ENCODE measurements at regions of chr1 and their contacts with region 1.

Region 1: DNA sequence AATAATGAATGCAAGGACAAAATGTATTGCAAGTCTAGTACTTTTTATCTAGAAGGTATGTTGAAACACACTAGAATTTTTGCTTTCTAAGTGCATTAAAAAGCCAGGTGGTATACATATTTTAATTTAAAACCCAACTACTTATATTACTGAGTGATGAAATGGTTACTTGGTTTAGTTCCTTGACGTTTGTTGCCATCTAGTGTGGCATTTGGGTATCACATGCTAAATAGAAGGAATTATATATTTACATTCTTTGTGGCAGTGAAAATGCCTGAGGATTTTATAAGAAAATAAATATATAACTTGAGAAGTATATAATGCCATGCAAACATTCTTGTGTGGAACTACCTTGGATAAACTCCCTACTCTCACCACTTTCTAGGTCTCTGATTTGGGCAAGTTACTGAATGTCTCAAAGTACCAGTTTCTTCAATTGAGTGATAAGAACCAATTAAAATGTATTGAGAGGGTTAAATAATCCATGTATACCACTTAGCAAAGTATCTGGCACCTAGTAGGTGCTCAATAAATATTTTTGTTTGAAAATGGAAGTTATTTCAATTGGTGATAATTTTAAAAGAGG is 69.6 kb downstream of the SDCCAG8 start:
- DNase-seq: peak; percentile 35
- CTCF ChIP-seq: peak; percentile 80

Region 2: DNA sequence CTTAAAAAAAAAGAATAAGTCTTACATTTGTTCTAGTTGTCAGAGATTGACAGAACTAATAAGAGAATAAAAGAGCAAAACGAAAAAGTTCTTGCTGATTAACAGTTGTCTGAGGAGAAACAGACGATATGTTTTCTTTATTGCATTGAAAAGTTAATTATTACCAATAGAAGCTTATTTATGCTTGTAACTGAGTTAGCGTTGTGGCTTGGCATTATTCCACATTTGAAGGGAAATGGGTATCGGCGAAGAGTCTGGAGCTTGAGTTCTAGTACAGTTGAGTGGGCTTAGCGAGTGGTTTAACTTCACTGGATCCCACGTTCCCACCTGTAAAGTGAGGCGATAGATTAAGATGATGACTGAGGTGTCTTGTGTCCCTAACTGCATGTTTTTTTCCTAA is 39.5 kb after region 1 on chr1:
- in situ Hi-C with region 1: no loop called
- DNase-seq: no peak
- CTCF ChIP-seq: no peak

Region 3: DNA sequence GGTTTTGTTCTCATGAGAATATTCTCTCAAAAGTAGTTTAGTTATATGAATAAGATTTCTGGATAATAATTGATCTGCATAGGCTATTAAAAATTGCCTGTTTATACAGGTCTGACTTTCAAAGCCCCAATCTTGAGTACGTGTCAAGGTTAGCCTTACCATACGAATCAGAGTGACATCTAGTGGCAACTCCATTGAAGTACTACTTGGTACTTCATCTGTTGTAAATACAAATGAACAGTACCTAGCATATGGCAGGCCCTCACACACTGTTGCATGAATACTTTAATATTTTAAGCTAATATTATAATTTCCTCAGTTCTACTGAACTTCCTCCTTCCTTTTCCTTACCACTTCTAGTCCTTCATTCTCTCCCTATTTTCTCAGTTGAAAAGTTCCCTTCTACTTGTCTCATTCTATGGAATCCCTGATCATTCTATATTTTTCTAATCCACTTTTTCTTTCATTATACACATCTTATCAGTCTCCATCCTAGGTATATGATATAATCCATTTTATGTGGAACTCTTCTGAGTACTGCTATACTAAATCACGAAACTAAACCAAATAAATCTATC is 423.4 kb after region 1 on chr1:
- in situ Hi-C with region 1: loop called (anchors 25 kb)
- DNase-seq: peak; percentile 77
- CTCF ChIP-seq: peak; percentile 71

Region 4: GRCh38 chr1:244272471-244273261 is 947.3 kb after region 1 on chr1:
- in situ Hi-C with region 1: loop called (anchors 25 kb)
- DNase-seq: peak; percentile 75
- CTCF ChIP-seq: peak; percentile 97